ENCODE measurements at regions of chr6 and their contacts with region 1.

Region 1: DNA sequence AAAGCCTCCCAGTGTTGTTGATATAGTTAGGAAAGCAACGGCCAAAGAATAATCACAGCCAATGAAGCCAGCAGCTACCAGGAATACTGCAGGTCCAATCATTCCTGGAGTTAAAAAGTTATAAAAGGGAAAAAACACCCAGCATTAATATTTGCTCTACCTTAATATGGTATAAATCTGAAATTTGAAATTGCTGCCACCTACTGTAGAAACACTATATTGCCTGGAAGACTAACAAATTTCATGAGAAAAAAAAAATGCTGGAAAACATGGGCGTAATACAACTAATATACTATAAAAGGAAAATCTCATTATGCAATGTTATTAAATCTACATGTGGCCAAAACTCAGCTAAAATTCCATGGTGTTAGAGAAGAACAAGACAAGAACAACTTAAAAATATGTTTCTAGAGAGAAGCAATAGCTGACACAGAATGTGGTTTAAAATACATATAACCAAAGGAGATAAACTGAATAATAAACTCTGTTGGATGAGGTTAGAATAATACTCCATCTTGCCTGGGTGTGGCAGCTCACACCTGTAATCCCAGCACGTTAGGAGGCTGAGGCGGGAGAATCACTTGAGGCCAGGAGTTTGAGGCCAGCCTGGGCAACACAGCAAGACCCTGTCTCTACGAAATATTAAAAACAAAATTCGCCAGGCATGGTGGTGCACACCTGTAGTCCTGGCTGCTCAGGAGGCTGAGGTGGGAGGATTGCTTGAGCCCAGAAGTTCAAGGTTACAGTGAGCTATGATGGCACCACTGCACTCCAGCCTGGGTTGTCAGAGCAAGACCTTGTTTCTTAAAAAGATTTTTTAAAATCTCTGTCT is 43.1 kb downstream of the SLC17A5 start:
- DNase-seq: peak in 2 of 5 donors; percentile 38 to 56
- H3K4me3 ChIP-seq: no peak overlapping the region
- H3K4me3 Mint-ChIP-seq: no peak overlapping the region
- H3K27ac ChIP-seq: no peak overlapping the region
- H3K27ac Mint-ChIP-seq: peak overlapping the region in 4 of 8 donors; percentile 2 to 69 (median 8)
- H3K4me1 ChIP-seq: peaks cover 3% of the 10 kb centered on the region
- H3K4me1 Mint-ChIP-seq: peaks cover 4 to 6% (median 6%) of the 10 kb centered on the region in 3 donors
- H3K27me3 ChIP-seq: no peaks in the 10 kb centered on the region
- H3K27me3 Mint-ChIP-seq: no peaks in the 10 kb centered on the region

Region 2: GRCh38 chr6:73585566-73586415 is 24.9 kb before region 1 on chr6:
- CTCF ChIA-PET with region 1: interaction called, 11 read pairs
- POLR2A ChIA-PET with region 1: interaction called, 3 read pairs
- DNase-seq: peak in 4 of 5 donors; percentile 17 to 67 (median 54)
- H3K4me3 ChIP-seq: peak overlapping the region; percentile 46
- H3K4me3 Mint-ChIP-seq: peak overlapping the region; percentile 55 to 87 (median 84)
- H3K27ac ChIP-seq: peak overlapping the region; percentile 82
- H3K27ac Mint-ChIP-seq: peak overlapping the region; percentile 96 to 99 (median 98)
- H3K4me1 ChIP-seq: peaks cover 8% of the 10 kb centered on the region
- H3K4me1 Mint-ChIP-seq: peaks cover 21 to 38% (median 27%) of the 10 kb centered on the region in 3 donors
- H3K27me3 ChIP-seq: no peaks in the 10 kb centered on the region
- H3K27me3 Mint-ChIP-seq: no peaks in the 10 kb centered on the region